SK-N-SH (cell line): ENCODE measurements at regions of chr15 and their contacts with region 1.

Region 1: DNA sequence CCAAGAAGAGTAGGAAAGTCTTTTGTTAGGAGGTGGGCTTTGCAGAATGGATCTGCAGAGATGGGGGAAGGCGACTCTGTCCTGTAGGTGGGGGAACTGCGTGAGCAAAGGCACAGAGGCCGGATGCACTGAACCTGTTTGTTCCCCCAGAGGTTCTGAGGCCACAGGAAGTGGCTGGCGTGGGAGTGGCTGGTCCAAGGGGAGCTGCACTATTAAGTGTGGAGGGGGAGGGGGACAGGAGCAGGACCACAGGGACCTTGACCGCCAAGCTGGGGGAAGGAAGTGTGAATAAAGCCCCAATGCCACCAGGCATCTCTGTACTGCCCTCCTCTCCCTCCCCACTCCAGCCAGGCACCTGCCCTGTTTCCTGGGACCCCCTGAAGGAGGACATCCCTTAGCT is 51.8 kb downstream of the CYP11A1 start:
- DNase-seq: no peak
- H3K4me3 ChIP-seq: no peak overlapping the region
- H3K27ac ChIP-seq: no peak overlapping the region
- H3K4me1 ChIP-seq: peaks cover 13 to 64% of the 10 kb centered on the region in 2 experiments; a peak in 3 of 4 replicates
- H3K27me3 ChIP-seq: no peaks in the 10 kb centered on the region
- CTCF ChIP-seq: no peak
- EP300 ChIP-seq: no peak
- RAD21 ChIP-seq: no peak

Region 2: GRCh38 chr15:74053941-74054529 is 261.6 kb before region 1 on chr15:
- CTCF ChIA-PET with region 1: interaction called, 339 read pairs
- POLR2A ChIA-PET with region 1: no interaction called
- DNase-seq: peak; percentile 94
- H3K4me3 ChIP-seq: peak overlapping the region in 1 of 2 experiments; percentile 8; a peak in 1 of 4 replicates
- H3K27ac ChIP-seq: peak overlapping the region in 1 of 2 experiments; percentile 35; a peak in 2 of 4 replicates
- H3K4me1 ChIP-seq: peaks cover 15 to 18% of the 10 kb centered on the region in 2 experiments; a peak in 3 of 4 replicates
- H3K27me3 ChIP-seq: no peaks in the 10 kb centered on the region
- CTCF ChIP-seq: peak; percentile 56
- EP300 ChIP-seq: no peak
- RAD21 ChIP-seq: peak; percentile 80